WTC11 (cell line): ENCODE measurements at regions of chr2 and their contacts with region 1.

Region 1: GRCh38 chr2:10091182-10091888 is 11.1 kb upstream of the CYS1 start:
- DNase-seq: peak; percentile 19
- ATAC-seq: no peak
- H3K4me3 Mint-ChIP-seq: no peak overlapping the region
- H3K27ac Mint-ChIP-seq: 0 out of 2 replicates have a peak overlapping the region, but pooled peaks have one; percentile 63
- H3K4me1 Mint-ChIP-seq: peaks cover 28% of the 10 kb centered on the region
- H3K27me3 Mint-ChIP-seq: peaks cover 8% of the 10 kb centered on the region
- CTCF ChIP-seq: no peak

Region 2: GRCh38 chr2:10028988-10029874 is 62.1 kb before region 1 on chr2:
- CTCF ChIA-PET with region 1: no interaction called
- POLR2A ChIA-PET with region 1: no interaction called
- DNase-seq: peak; percentile 52
- ATAC-seq: peak; percentile 69
- H3K4me3 Mint-ChIP-seq: no peak overlapping the region
- H3K27ac Mint-ChIP-seq: no peak overlapping the region
- H3K4me1 Mint-ChIP-seq: peaks cover 19% of the 10 kb centered on the region
- H3K27me3 Mint-ChIP-seq: no peaks in the 10 kb centered on the region
- CTCF ChIP-seq: no peak

Region 3: DNA sequence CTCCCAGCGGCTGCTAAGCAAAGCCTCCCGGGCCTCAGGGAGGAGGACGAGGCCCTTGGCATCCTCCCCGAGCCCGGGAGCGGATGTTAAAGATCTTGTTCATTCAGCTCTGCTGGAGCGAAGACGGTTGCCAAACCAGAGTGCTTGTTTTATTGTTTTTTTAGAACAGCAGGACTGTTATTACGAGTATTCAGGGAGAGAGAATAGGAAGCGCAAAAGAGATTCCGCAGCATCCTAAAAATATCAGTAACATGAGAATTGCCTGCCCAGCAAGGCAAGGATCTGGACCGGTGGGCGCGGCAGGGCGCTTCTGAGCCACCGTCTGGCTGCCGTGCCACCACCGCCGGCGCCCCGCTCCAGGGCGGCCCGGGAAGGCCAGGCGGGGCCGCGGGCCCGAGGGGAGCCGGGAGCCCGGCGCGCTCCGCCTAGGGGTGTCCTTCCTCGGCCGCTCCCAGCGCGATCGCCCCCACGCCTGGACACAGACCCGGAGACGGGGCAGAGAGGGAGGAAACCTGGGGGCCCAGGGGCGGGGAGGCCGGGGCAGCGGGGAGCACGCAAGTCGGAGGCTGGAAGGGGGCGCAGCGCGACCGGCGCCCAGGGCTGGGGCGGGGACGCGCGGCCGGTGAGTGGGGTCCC is 12.0 kb before region 1 on chr2:
- CTCF ChIA-PET with region 1: interaction called, 166 read pairs
- POLR2A ChIA-PET with region 1: interaction called, 5 read pairs
- DNase-seq: peak; percentile 36
- ATAC-seq: peak; percentile 56
- H3K4me3 Mint-ChIP-seq: peak overlapping the region; percentile 86
- H3K27ac Mint-ChIP-seq: no peak overlapping the region
- H3K4me1 Mint-ChIP-seq: peaks cover 16% of the 10 kb centered on the region
- H3K27me3 Mint-ChIP-seq: peaks cover 59% of the 10 kb centered on the region
- CTCF ChIP-seq: no peak

Region 4: DNA sequence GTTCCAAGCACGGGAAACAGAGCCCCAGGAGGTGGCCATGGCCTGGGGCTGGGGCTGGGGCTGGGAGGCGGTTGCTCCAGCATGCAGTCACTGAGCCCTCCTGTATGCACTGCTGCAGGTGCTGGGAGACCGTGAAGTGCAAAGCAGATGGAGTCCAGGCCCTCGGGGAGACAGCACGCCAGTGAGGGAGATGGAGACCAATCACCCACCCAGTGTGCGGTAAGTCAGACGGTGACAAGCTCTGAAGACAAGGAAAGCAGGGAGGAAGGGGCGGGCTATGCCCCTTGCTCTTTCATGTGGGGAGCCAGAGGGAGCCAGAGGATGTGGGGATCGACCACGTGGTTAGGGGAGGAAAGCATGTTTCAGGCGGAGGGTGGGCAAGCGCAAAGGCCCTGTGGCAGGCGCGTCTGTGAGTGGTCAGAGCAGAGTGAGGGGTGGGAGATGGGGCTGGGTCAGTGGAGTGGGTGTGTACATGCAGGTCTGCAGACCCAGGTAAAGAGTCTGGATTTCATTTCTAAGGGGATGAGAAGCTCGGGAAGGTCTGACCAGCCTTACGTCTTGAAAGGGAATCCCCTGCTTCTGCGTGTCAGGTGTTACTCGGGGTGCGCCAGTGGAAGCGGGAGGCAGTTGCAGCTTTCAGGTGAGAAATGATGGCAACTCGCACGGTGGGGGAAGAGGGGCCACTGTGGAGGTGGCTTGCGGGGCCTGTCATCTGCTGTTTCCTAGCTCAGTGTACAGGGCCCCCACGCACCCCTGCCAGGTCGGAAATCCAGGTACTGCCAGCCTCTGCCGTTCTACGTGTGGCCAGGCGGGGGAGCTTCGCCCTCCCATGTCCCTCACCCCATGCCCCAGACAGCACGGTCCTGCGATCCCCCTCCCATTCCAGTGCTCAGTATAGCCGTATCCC is 50.7 kb after region 1 on chr2:
- CTCF ChIA-PET with region 1: no interaction called
- POLR2A ChIA-PET with region 1: no interaction called
- DNase-seq: peak; percentile 68
- ATAC-seq: peak; percentile 89
- H3K4me3 Mint-ChIP-seq: no peak overlapping the region
- H3K27ac Mint-ChIP-seq: no peak overlapping the region; the same call in 1 of the 2 replicates
- H3K4me1 Mint-ChIP-seq: peaks cover 5% of the 10 kb centered on the region; the same call in 1 of the 2 replicates
- H3K27me3 Mint-ChIP-seq: no peaks in the 10 kb centered on the region
- CTCF ChIP-seq: peak; percentile 60

Region 5: GRCh38 chr2:10360851-10361588 is 269.7 kb after region 1 on chr2:
- CTCF ChIA-PET with region 1: no interaction called
- POLR2A ChIA-PET with region 1: no interaction called
- DNase-seq: no peak
- ATAC-seq: no peak
- H3K4me3 Mint-ChIP-seq: no peak overlapping the region
- H3K27ac Mint-ChIP-seq: 0 out of 2 replicates have a peak overlapping the region, but pooled peaks have one; percentile 10
- H3K4me1 Mint-ChIP-seq: peaks cover 7% of the 10 kb centered on the region
- H3K27me3 Mint-ChIP-seq: no peaks in the 10 kb centered on the region
- CTCF ChIP-seq: no peak